ENCODE measurements at regions of chr20 and their contacts with region 1.

Region 1: GRCh38 chr20:50165684-50166554 is 12.4 kb upstream of the PEDS1 start:
- DNase-seq: peak; percentile 99 to 100 (median 100)
- H3K4me3 ChIP-seq: peak overlapping the region in 5 of 7 experiments; percentile 34 to 67 (median 47)
- H3K27ac ChIP-seq: peak overlapping the region; percentile 62 to 86
- H3K4me1 ChIP-seq: peaks cover 3 to 17% (median 13%) of the 10 kb centered on the region in 4 experiments
- H3K27me3 ChIP-seq: no peaks in the 10 kb centered on the region

Region 2: GRCh38 chr20:49982346-49983122 is 183.4 kb before region 1 on chr20 and contains the start of gene SNAI1:
- CTCF ChIA-PET with region 1: interaction called, 13 read pairs
- POLR2A ChIA-PET with region 1: no interaction called
- DNase-seq: peak; percentile 83 to 93 (median 92)
- H3K4me3 ChIP-seq: peak within 1 kb of the TSS in 6 of 7 experiments; percentile 42 to 73 (median 61)
- H3K27ac ChIP-seq: peak within 1 kb of the TSS in 1 of 2 experiments; percentile 78
- H3K4me1 ChIP-seq: peaks cover 0 to 70% (median 35%) of the 10 kb centered on the region in 4 experiments
- H3K27me3 ChIP-seq: no peaks in the 10 kb centered on the region

Region 3: GRCh38 chr20:50133474-50134217 is 32.3 kb before region 1 on chr20:
- CTCF ChIA-PET with region 1: interaction called, 335 read pairs
- POLR2A ChIA-PET with region 1: no interaction called
- DNase-seq: no peak
- H3K4me3 ChIP-seq: no peak overlapping the region
- H3K27ac ChIP-seq: no peak overlapping the region
- H3K4me1 ChIP-seq: no peaks in the 10 kb centered on the region
- H3K27me3 ChIP-seq: no peaks in the 10 kb centered on the region

Region 4: DNA sequence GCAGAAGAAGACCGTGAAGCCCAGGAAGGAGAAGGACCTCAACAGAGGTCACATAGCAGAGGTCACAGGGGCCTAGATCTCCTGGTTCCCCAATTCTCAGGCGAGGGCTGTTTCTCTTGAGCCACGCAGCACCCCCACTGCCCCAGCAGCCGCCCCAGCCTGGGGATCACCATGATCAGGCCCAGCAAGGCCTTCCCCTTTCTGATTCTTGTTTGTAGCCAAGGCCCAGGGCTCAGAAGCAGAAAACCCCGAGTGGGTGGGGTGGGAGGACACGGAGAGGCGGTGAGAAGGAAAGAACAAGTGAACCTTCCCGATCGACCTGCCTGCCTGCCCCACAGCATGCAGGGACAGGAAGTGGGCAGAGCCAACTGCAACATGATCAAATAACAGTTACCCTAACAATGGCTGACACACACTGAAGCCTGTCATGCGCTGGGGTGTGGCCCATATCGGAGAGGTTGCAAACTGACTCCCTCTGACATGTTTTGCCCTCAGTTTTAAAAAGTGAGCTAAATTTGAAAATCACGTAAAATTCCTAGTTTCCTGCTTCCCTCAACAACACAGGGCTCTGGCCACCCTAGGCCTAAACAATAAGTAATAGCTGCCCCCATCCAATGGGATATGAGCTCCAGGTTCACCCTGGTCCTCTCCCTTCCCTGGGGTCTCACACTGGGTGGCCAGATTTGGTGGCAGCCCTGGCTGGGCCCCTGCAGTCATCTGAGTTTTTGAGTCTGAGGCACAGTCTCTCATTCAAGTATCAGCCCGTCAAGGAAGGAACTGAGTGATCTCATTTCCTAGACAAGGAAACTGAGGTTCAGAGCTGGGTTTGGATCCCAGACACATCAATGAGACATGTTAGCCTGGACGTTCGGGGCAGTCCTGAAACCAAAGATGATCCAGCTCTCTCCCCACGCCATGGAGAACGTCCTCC is 18.9 kb before region 1 on chr20:
- CTCF ChIA-PET with region 1: interaction called, 30 read pairs
- POLR2A ChIA-PET with region 1: no interaction called
- DNase-seq: peak; percentile 73 to 93 (median 86)
- H3K4me3 ChIP-seq: peak overlapping the region in 3 of 7 experiments; percentile 19 to 33 (median 20)
- H3K27ac ChIP-seq: peak overlapping the region; percentile 71 to 82
- H3K4me1 ChIP-seq: peaks cover 3 to 32% (median 29%) of the 10 kb centered on the region in 4 experiments
- H3K27me3 ChIP-seq: no peaks in the 10 kb centered on the region

Region 5: DNA sequence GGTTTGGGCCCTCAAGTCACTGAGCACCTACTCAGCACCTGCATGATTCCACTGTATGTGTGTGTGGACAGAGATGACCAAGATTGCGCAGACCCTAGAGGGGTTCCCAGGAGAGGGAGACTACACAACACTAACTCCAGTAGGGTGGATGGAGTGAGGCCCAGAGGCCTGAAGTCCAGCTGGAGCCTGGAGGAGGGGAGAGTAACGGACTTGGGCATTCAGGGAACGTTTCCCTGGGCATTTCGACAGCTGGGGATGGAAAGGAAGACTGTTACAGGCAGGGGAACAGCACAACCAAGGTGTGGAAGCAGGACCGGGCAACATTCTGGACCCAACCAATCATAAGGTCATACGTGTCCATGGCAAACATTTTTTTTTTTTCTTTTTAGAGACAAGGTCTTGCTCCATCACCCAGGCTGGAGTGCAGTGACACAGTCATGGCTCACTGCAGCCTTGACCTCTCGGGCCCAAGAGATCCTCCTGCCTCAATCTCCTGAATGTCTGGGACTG is 13.6 kb after region 1 on chr20:
- CTCF ChIA-PET with region 1: interaction called, 30 read pairs
- POLR2A ChIA-PET with region 1: no interaction called
- DNase-seq: no peak
- H3K4me3 ChIP-seq: no peak overlapping the region
- H3K27ac ChIP-seq: no peak overlapping the region
- H3K4me1 ChIP-seq: peaks cover 0 to 2% (median 0%) of the 10 kb centered on the region in 4 experiments
- H3K27me3 ChIP-seq: no peaks in the 10 kb centered on the region